Activated CD8-positive, alpha-beta T cell treated with anti-CD3 and anti-CD28 coated beads, Interleukin-2, amount 10 ng/mL, durations not matched to agents 7 days and 5 days (primary cell): ENCODE measurements at regions of chr17 and their contacts with region 1.

Region 1: DNA sequence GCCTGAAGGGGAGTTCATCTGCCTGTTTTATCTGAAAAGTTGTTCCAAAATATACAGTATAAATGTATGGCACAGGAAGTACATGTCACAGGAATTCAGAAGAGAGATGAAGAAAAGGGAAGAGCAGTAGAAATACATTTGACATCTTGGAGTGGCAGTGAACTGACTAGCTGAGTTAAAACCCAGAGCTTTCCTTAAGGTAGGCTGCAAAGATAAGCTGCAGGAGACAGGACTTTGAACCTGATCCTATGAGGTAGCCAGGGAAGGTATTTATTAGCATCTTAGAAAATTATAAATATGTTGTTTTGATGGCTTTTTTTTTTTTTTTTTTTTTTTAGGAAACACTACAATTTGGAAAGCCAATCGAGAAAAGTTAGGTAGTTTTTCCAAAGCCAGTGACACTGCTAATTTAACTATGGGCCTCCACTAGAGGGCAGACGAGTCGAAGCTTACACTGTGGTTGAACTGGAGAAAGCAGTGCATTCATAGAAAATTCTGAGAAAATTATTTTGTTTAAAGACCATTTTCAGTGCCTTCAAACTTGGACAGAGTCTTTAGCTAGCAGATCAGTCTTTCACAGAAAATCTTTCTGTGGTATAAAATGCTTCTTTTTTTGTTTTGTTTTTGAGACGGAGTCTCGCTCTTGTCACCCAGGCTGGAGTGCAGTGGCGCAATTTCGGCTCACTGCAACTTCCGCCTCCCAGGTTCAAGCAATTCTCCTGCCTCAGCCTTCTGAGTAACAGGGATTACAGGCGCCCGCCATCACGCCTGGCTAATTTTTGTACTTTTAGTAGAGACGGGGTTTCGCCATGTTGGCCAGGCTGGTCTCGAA is 122.3 kb downstream of the SSH2 start:
- DNase-seq: peak; percentile 82
- ATAC-seq: peak; percentile 74
- H3K4me3 Mint-ChIP-seq: no peak overlapping the region
- H3K27ac Mint-ChIP-seq: no peak overlapping the region
- H3K4me1 Mint-ChIP-seq: peaks cover 21% of the 10 kb centered on the region
- H3K27me3 Mint-ChIP-seq: no peaks in the 10 kb centered on the region

Region 2: DNA sequence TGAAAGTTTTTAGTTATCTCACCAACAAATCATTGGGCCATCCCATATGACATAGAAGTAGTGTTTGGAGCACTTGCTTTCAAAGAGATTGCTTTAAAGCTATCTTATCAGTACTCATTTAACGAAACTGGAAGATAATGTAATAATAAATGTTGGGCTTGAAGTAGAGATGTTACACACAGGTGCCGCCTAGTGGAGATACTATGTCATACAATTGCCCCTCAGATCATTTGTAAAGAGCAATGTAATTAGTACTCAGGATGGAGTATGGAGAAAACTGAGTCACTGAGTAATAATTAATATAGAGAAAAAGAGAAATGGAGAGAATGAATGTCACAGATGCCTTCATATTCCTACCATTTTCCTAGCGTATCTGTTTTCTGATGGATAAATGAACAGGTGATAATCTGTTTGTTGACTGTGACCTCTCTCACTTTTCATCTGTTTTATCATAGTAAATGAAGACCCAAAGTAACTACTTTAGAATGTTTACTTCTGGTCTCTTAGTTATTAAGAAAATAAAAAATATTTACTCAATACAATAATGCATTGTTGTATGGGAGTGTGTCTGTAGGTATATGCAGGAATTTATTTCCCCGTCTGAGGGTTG is 214.1 kb after region 1 on chr17:
- CTCF ChIA-PET with region 1: interaction called, 20 read pairs
- POLR2A ChIA-PET with region 1: no interaction called
- DNase-seq: peak; percentile 62
- ATAC-seq: peak; percentile 61
- H3K4me3 Mint-ChIP-seq: no peak overlapping the region
- H3K27ac Mint-ChIP-seq: no peak overlapping the region
- H3K4me1 Mint-ChIP-seq: no peaks in the 10 kb centered on the region
- H3K27me3 Mint-ChIP-seq: peaks cover 12% of the 10 kb centered on the region